B cell (primary cell): ENCODE measurements at regions of chr21 and their contacts with region 1.

Region 1: GRCh38 chr21:44801468-44802395 is at the start of gene UBE2G2:
- DNase-seq: peak; percentile 91
- ATAC-seq: peak; percentile 90
- H3K4me3 ChIP-seq: peak within 1 kb of the TSS; percentile 63 to 87 (median 78)
- H3K4me3 Mint-ChIP-seq: peak within 1 kb of the TSS; percentile 100
- H3K27ac ChIP-seq: peak within 1 kb of the TSS; percentile 65 to 75
- H3K27ac Mint-ChIP-seq: peak within 1 kb of the TSS; percentile 95
- H3K4me1 ChIP-seq: peaks cover 19 to 21% of the 10 kb centered on the region in 2 donors
- H3K4me1 Mint-ChIP-seq: peaks cover 40% of the 10 kb centered on the region
- H3K27me3 ChIP-seq: no peaks in the 10 kb centered on the region
- H3K27me3 Mint-ChIP-seq: no peaks in the 10 kb centered on the region
- CTCF ChIP-seq: no peak
- total RNA-seq, gene UBE2G2: 96.4 and 97.2 TPM in 2 replicates

Region 2: GRCh38 chr21:43789276-43790009 is 1012.3 kb before region 1 on chr21 and contains the start of gene RRP1:
- CTCF ChIA-PET with region 1: no interaction called
- POLR2A ChIA-PET with region 1: no interaction called
- intact Hi-C with region 1: loop called (anchors 5 kb)
- DNase-seq: peak; percentile 97
- ATAC-seq: peak; percentile 99
- H3K4me3 ChIP-seq: peak within 1 kb of the TSS; percentile 60 to 89 (median 79)
- H3K4me3 Mint-ChIP-seq: peak within 1 kb of the TSS; percentile 94
- H3K27ac ChIP-seq: peak within 1 kb of the TSS; percentile 44 to 78
- H3K27ac Mint-ChIP-seq: peak within 1 kb of the TSS; percentile 89
- H3K4me1 ChIP-seq: peaks cover 9 to 21% of the 10 kb centered on the region in 2 donors
- H3K4me1 Mint-ChIP-seq: peaks cover 13% of the 10 kb centered on the region
- H3K27me3 ChIP-seq: no peaks in the 10 kb centered on the region
- H3K27me3 Mint-ChIP-seq: no peaks in the 10 kb centered on the region
- CTCF ChIP-seq: peak; percentile 96
- total RNA-seq, gene RRP1: 27.8 and 28.6 TPM in 2 replicates

Region 3: DNA sequence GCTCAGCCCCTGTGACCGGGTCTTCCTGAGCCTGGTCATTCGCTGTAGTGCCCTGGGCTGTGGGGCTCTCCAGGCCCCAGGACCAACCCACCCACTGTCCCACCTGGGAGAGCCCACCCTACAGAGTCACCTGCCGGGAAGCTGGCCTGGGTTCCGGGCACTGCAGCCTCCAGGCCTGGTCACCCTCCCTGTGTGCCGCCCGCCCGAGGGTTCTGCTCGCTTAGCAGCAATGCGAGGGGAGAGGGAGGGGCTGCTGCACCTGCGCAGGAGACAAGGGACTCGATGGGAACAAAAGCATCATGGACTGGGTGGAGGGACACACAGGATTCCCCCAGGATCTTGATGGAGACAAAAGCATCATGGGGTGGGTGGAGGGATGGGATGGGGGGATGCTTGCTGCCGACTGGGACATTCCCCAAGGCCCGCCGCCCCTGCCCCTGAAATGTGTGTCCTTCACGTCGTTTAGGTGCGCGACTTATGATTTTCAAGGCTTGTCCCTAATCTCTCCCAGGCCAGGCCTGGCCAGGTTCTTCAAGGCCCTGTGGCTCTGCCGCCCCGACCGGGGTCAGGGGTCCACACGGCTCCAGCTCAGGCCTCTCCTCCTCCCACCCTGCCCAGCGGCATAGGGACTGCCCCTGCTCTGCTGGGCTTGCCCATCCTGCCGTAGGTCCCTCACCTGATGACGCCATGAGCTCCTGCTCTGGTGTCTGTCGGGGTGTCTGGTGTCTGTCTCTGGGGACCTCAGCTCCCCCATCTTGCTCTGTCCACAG is 188.2 kb before region 1 on chr21:
- CTCF ChIA-PET with region 1: no interaction called
- POLR2A ChIA-PET with region 1: no interaction called
- intact Hi-C with region 1: no loop called
- DNase-seq: no peak
- ATAC-seq: no peak
- H3K4me3 ChIP-seq: no peak overlapping the region
- H3K4me3 Mint-ChIP-seq: no peak overlapping the region
- H3K27ac ChIP-seq: no peak overlapping the region
- H3K27ac Mint-ChIP-seq: no peak overlapping the region
- H3K4me1 ChIP-seq: peaks cover 4% of the 10 kb centered on the region in 2 donors
- H3K4me1 Mint-ChIP-seq: peaks cover 5% of the 10 kb centered on the region
- H3K27me3 ChIP-seq: peaks cover 0 to 3% (median 1%) of the 10 kb centered on the region in 4 experiments
- H3K27me3 Mint-ChIP-seq: peaks cover 4% of the 10 kb centered on the region
- CTCF ChIP-seq: no peak

Region 4: DNA sequence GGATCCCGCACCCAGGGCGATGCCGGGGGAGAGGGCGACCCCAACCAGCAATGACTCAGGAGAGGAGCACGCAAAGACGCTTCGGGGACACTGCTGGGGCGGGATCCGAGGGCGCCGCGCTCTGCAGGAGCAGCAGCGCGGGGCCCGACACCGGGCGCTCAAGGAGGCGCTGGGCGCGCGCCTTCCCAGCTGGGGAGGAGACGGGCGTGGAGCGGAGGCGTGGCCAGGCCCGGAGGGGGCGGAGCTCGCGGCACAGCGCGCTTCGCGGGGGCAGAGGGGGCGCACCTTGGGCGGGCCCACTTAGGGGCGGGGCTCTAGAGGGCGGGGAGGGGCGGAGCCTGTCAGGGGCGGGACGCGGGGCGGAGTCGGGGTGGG is 15.8 kb after region 1 on chr21:
- CTCF ChIA-PET with region 1: interaction called, 8 read pairs
- POLR2A ChIA-PET with region 1: interaction called, 12 read pairs
- intact Hi-C with region 1: loop called (anchors 1 kb)
- DNase-seq: peak; percentile 91
- ATAC-seq: peak; percentile 95
- H3K4me3 ChIP-seq: peak overlapping the region in 4 of 5 experiments; percentile 47 to 80 (median 76)
- H3K4me3 Mint-ChIP-seq: peak overlapping the region; percentile 63
- H3K27ac ChIP-seq: no peak overlapping the region
- H3K27ac Mint-ChIP-seq: peak overlapping the region; percentile 50
- H3K4me1 ChIP-seq: peaks cover 5 to 16% of the 10 kb centered on the region in 2 donors
- H3K4me1 Mint-ChIP-seq: peaks cover 10% of the 10 kb centered on the region
- H3K27me3 ChIP-seq: no peaks in the 10 kb centered on the region
- H3K27me3 Mint-ChIP-seq: no peaks in the 10 kb centered on the region
- CTCF ChIP-seq: no peak

Region 5: DNA sequence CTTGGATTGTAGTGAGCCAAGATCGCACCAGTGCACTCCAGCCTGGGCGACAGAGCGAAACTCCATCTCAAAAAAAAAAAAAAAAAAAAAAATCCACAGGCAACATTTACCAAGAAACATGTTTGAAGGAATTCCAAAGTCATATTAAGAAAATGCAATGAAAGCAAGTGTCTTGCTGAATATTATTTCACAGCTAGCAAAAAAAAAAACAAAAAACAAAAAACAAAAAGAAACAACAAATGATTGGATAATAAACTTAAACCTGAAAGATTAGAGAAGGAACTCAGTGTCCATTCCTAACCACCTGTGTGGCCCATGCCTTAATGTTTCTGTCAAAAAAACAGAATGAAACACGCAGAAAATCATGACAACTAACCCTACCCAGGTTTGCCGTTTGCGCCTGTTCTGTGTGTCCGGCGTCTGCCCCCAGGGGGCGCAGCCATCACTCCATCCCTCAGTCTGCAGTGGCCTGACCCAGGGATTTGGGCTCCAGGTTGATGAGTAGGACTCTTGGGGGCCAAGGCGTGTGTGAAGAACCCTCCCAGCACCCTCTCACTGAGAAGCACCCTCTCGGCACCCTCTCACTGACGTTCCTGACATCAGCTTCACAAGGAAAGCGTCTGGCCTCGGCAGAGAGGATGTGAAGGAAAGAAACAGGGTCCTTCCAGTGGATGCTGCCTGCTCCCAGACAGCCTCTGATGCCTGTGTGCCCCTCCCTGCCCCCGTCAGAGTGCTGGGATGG is 91.0 kb after region 1 on chr21:
- CTCF ChIA-PET with region 1: interaction called, 14 read pairs
- POLR2A ChIA-PET with region 1: no interaction called
- intact Hi-C with region 1: no loop called
- DNase-seq: peak; percentile 82
- ATAC-seq: peak; percentile 89
- H3K4me3 ChIP-seq: no peak overlapping the region
- H3K4me3 Mint-ChIP-seq: no peak overlapping the region
- H3K27ac ChIP-seq: no peak overlapping the region
- H3K27ac Mint-ChIP-seq: no peak overlapping the region
- H3K4me1 ChIP-seq: peaks cover 3 to 16% of the 10 kb centered on the region in 2 donors
- H3K4me1 Mint-ChIP-seq: peaks cover 27% of the 10 kb centered on the region
- H3K27me3 ChIP-seq: no peaks in the 10 kb centered on the region
- H3K27me3 Mint-ChIP-seq: no peaks in the 10 kb centered on the region
- CTCF ChIP-seq: peak; percentile 89

Region 6: GRCh38 chr21:44927587-44928461 is 126.1 kb after region 1 on chr21:
- CTCF ChIA-PET with region 1: interaction called, 49 read pairs
- POLR2A ChIA-PET with region 1: interaction called, 16 read pairs
- intact Hi-C with region 1: loop called (anchors 1 kb)
- DNase-seq: peak; percentile 79
- ATAC-seq: peak; percentile 53
- H3K4me3 ChIP-seq: peak overlapping the region; percentile 52 to 72 (median 59)
- H3K4me3 Mint-ChIP-seq: peak overlapping the region; percentile 82
- H3K27ac ChIP-seq: peak overlapping the region; percentile 69 to 72
- H3K27ac Mint-ChIP-seq: peak overlapping the region; percentile 95
- H3K4me1 ChIP-seq: peaks cover 77 to 92% of the 10 kb centered on the region in 2 donors
- H3K4me1 Mint-ChIP-seq: peaks cover 83% of the 10 kb centered on the region
- H3K27me3 ChIP-seq: no peaks in the 10 kb centered on the region
- H3K27me3 Mint-ChIP-seq: no peaks in the 10 kb centered on the region
- CTCF ChIP-seq: no peak

Region 7: GRCh38 chr21:45130324-45130774 is 328.6 kb after region 1 on chr21:
- CTCF ChIA-PET with region 1: interaction called, 19 read pairs
- POLR2A ChIA-PET with region 1: interaction called, 11 read pairs
- intact Hi-C with region 1: loop called (anchors 5 kb)
- DNase-seq: no peak
- ATAC-seq: no peak
- H3K4me3 ChIP-seq: no peak overlapping the region
- H3K4me3 Mint-ChIP-seq: no peak overlapping the region
- H3K27ac ChIP-seq: no peak overlapping the region
- H3K27ac Mint-ChIP-seq: no peak overlapping the region
- H3K4me1 ChIP-seq: peaks cover 55 to 57% of the 10 kb centered on the region in 2 donors
- H3K4me1 Mint-ChIP-seq: peaks cover 62% of the 10 kb centered on the region
- H3K27me3 ChIP-seq: no peaks in the 10 kb centered on the region
- H3K27me3 Mint-ChIP-seq: no peaks in the 10 kb centered on the region
- CTCF ChIP-seq: no peak